ENCODE measurements at regions of chr3 and their contacts with region 1.

Region 1: GRCh38 chr3:98039322-98040024 is 4.4 kb upstream of the GABRR3 start:
- DNase-seq: peak; percentile 87
- ATAC-seq: peak; percentile 99
- H3K4me3 ChIP-seq: peak overlapping the region; percentile 66
- H3K27ac ChIP-seq: no peak overlapping the region
- H3K4me1 ChIP-seq: no peaks in the 10 kb centered on the region
- H3K27me3 ChIP-seq: no peaks in the 10 kb centered on the region
- CTCF ChIP-seq: peak; percentile 69
- POLR2A ChIP-seq: no peak
- RAD21 ChIP-seq: peak; percentile 74

Region 2: GRCh38 chr3:98058244-98058960 is 18.9 kb after region 1 on chr3:
- CTCF ChIA-PET with region 1: no interaction called
- POLR2A ChIA-PET with region 1: no interaction called
- dilution Hi-C with region 1: no loop called
- in situ Hi-C with region 1: no loop called
- intact Hi-C with region 1: no loop called
- DNase-seq: no peak
- ATAC-seq: no peak
- H3K4me3 ChIP-seq: no peak overlapping the region
- H3K27ac ChIP-seq: no peak overlapping the region
- H3K4me1 ChIP-seq: no peaks in the 10 kb centered on the region
- H3K27me3 ChIP-seq: no peaks in the 10 kb centered on the region
- CTCF ChIP-seq: no peak
- POLR2A ChIP-seq: no peak
- RAD21 ChIP-seq: no peak

Region 3: DNA sequence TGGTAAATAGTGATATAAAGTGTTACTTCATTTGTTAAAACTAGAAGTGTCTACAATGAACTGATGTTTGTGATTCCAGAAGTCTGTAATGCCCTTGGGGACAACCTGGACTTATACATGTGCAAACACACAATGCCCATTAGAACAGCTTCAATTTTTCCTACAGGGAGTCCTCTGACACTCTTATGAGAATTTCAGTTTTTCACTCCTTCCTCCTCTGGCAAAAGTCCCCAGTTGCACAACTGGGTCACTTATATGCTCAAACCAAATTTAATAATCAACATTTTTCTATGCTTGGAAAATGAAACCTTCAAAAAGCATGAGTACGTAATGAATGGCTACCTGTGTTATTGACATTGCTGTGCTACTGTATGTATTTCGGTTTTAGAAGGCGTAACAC is 126.9 kb after region 1 on chr3 and contains the start of gene OR5H15:
- CTCF ChIA-PET with region 1: no interaction called
- POLR2A ChIA-PET with region 1: no interaction called
- dilution Hi-C with region 1: no loop called
- in situ Hi-C with region 1: no loop called
- intact Hi-C with region 1: no loop called
- DNase-seq: no peak
- ATAC-seq: no peak
- H3K4me3 ChIP-seq: no peak within 1 kb of the TSS
- H3K27ac ChIP-seq: no peak within 1 kb of the TSS
- H3K4me1 ChIP-seq: no peaks in the 10 kb centered on the region
- H3K27me3 ChIP-seq: no peaks in the 10 kb centered on the region
- CTCF ChIP-seq: no peak
- POLR2A ChIP-seq: no peak
- RAD21 ChIP-seq: no peak
- total RNA-seq, gene OR5H15: not detected in 2 replicates

Region 4: DNA sequence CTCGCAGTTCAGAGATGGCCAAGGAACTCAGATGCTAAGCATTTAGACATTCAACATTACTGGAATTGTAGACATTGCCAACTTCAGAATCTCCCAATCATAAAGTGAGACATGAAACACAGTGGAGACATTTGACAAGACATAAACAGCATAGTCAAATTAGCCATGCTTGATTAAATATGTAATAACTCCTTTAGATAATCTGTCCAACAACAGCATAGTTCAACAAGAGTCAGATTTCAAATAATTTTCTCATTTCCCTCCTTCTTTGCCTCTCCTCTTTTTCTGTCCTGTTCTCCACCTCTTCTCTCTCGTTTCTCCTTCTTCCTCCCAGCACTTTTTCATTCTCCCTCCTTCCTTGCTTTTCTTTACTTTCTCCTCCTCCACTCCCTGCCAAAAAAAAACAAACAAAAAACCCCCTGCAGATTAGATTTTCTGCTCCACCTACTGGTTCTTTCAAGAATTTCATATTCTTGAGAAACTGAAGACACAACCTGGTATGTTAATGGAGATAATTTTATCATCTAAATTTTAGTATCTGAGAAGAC is 533.8 kb after region 1 on chr3:
- CTCF ChIA-PET with region 1: no interaction called
- POLR2A ChIA-PET with region 1: no interaction called
- dilution Hi-C with region 1: no loop called
- in situ Hi-C with region 1: loop called (anchors 10 kb)
- intact Hi-C with region 1: loop called (anchors 5 kb)
- DNase-seq: peak; percentile 33
- ATAC-seq: peak; percentile 46
- H3K4me3 ChIP-seq: no peak overlapping the region
- H3K27ac ChIP-seq: no peak overlapping the region
- H3K4me1 ChIP-seq: peaks cover 2% of the 10 kb centered on the region; the same call in 1 of the 2 replicates
- H3K27me3 ChIP-seq: no peaks in the 10 kb centered on the region
- CTCF ChIP-seq: peak; percentile 51
- POLR2A ChIP-seq: no peak
- RAD21 ChIP-seq: peak; percentile 37